ENCODE measurements at regions of chr3 and their contacts with region 1.

Region 1: DNA sequence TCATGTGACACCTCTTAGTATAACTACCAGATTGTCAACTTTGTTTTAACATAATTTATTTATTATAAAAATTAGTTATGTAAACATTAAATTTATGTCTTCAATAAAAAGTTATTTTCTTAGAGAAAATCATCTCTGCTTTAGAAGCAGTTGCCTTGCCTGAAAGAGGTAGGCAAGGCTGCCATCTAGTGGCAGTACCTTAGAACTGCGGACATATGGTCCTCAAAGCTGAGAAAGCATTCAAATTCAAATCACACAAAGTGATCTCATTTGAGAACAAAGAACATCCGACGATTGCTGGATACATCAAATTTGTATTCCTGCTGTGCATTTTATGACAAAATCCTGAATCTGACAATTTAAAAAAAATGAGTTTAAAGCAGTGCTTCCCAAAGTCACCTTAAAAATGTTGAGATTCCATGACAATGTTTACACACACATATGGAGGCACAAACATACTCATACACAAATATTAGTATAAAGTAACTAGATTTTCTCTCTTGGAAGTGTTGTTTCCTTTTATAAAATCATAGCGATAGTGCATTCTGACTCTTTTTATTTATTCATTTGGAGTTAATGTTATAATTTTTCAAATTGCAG is 617.4 kb downstream of the CADM2 start:
- DNase-seq: no peak
- ATAC-seq: no peak

Region 2: GRCh38 chr3:84547971-84548970 is 1027.9 kb before region 1 on chr3:
- intact Hi-C with region 1: loop called (anchors 5 kb)
- DNase-seq: peak; percentile 52
- ATAC-seq: peak; percentile 63

Region 3: GRCh38 chr3:85455561-85456196 is 120.5 kb before region 1 on chr3:
- intact Hi-C with region 1: no loop called
- DNase-seq: no peak
- ATAC-seq: no peak

Region 4: DNA sequence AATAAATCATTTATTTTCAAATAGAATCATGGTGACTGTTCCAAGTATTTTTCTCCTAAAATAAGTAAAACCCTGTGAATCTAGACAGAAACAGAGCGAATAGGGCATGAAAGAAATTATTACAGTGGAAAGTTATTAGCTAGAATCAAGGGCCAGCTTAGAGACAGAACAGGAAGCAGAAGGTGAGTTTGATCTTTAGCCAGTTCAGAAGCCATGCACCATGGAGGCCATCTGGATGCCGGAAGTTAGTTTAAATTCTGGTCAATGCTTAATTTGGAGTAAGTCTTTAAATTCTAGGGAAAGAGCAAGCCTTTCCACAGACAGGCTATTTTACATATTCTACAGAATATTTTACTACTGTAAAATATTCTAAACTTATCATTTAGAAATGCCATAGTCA is 42.6 kb before region 1 on chr3:
- intact Hi-C with region 1: no loop called
- DNase-seq: no peak
- ATAC-seq: no peak

Measured in Right ventricle myocardium inferior (tissue), 1 donor.